AG04450 (cell line): ENCODE measurements at regions of chr10 and their contacts with region 1.

Region 1: GRCh38 chr10:71569775-71570588 is 149.6 kb downstream of the C10orf105 start:
- DNase-seq: no peak
- H3K4me3 ChIP-seq: no peak overlapping the region
- H3K27ac ChIP-seq: no peak overlapping the region
- H3K27me3 ChIP-seq: peaks cover 20% of the 10 kb centered on the region
- CTCF ChIP-seq: peak; percentile 78

Region 2: DNA sequence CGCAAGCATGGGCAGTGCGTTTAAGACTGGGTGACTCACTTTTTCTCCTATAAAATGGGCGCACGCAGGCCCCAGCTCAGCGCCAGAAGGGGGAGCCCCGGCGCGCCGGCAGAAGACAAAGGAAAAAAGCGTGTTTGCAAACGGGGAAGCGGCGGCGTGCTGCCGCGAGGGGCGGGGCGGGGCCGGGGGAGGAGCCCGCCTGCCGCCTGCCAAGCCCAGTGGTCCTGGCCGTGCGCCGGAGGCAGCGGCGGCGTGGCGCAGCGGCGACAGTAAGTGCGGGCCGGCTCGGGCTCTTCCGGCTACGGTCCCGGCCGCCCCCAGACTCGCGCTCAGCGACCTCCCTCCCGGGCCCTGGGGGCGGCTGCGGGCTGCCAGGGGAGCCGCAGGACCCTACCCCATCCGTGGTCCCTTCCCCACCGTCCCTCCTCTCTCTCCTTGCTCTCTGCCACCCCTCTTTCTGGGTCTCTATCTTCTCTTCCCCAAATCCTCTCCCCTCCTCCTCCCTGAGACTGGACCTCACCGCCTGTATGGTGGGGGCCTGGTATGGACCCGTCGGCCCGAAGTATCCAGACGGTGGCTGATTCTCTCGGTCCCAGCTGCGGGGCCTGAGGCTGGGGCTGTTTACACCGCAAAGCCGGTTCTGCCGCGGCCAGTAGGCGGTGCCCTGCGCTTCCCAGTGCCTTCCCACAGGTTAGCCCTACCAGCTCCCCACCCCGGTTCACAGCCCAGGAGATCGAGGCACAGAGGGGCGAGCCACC is 250.8 kb before region 1 on chr10 and contains the start of gene SLC29A3:
- CTCF ChIA-PET with region 1: interaction called, 88 read pairs
- POLR2A ChIA-PET with region 1: no interaction called
- DNase-seq: peak; percentile 21
- H3K4me3 ChIP-seq: peak within 1 kb of the TSS; percentile 71
- H3K27ac ChIP-seq: no peak within 1 kb of the TSS
- H3K27me3 ChIP-seq: peaks cover 4% of the 10 kb centered on the region
- CTCF ChIP-seq: peak; percentile 77
- polyA plus RNA-seq, gene SLC29A3: 2.4 and 3.8 TPM in 2 replicates

Region 3: GRCh38 chr10:71383972-71384687 is 185.9 kb before region 1 on chr10:
- CTCF ChIA-PET with region 1: interaction called, 24 read pairs
- POLR2A ChIA-PET with region 1: no interaction called
- DNase-seq: no peak
- H3K4me3 ChIP-seq: no peak overlapping the region
- H3K27ac ChIP-seq: no peak overlapping the region
- H3K27me3 ChIP-seq: peaks cover 27% of the 10 kb centered on the region
- CTCF ChIP-seq: peak; percentile 84

Region 4: GRCh38 chr10:71554671-71555070 is 15.3 kb before region 1 on chr10:
- CTCF ChIA-PET with region 1: interaction called, 14 read pairs
- POLR2A ChIA-PET with region 1: no interaction called
- DNase-seq: no peak
- H3K4me3 ChIP-seq: no peak overlapping the region
- H3K27ac ChIP-seq: no peak overlapping the region
- H3K27me3 ChIP-seq: peaks cover 36% of the 10 kb centered on the region
- CTCF ChIP-seq: no peak

Region 5: GRCh38 chr10:71683301-71683700 is 113.3 kb after region 1 on chr10:
- CTCF ChIA-PET with region 1: no interaction called
- POLR2A ChIA-PET with region 1: no interaction called
- DNase-seq: no peak
- H3K4me3 ChIP-seq: no peak overlapping the region
- H3K27ac ChIP-seq: no peak overlapping the region
- H3K27me3 ChIP-seq: peaks cover 49% of the 10 kb centered on the region
- CTCF ChIP-seq: no peak

Region 6: DNA sequence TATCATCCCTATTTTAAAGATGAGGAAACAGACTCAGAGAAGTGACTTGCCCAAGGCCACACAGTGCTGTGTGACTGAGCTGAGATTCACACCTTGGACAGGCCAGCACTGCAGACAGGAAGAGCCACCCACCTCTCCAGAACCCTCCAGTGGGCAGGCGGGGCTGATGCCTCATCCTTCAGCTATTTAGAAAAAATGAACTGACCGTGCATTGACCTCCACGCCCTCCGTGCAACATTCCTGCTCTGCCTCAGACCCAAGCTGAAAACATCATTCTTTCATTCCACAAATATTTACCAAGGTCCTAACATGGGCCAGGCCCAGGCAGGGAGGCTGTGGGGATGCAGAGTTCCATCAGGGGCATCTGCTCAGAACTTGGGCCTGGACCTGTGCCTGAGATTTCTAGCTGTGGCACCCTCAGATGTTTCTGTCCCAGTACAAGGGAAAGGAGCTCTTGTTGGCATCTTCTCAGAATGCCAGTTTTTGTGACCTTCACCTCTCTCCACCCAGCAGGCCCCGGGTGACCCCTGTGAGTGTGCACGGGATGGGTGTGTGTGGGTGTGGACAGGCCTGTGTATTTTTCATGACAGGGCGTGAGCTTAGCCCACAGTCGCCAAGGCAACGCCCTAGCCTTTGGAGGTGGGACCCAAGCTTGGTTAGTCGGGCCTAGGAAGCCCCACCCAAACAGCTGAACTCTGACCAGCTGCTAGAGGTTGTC is 196.9 kb after region 1 on chr10:
- CTCF ChIA-PET with region 1: no interaction called
- POLR2A ChIA-PET with region 1: no interaction called
- DNase-seq: peak; percentile 86
- H3K4me3 ChIP-seq: no peak overlapping the region; the same call in 1 of the 2 replicates
- H3K27ac ChIP-seq: peak overlapping the region; percentile 95
- H3K27me3 ChIP-seq: no peaks in the 10 kb centered on the region
- CTCF ChIP-seq: no peak